IMR-90 (cell line): ENCODE measurements at regions of chr17 and their contacts with region 1.

Region 1: GRCh38 chr17:35170968-35171771 is 23.0 kb downstream of the SLC35G3 start:
- DNase-seq: peak; percentile 15
- ATAC-seq: peak; percentile 49
- H3K4me3 ChIP-seq: no peak overlapping the region
- H3K27ac ChIP-seq: no peak overlapping the region
- H3K4me1 ChIP-seq: peaks cover 4% of the 10 kb centered on the region; the same call in 1 of the 2 replicates
- H3K27me3 ChIP-seq: peaks cover 3% of the 10 kb centered on the region; the same call in 1 of the 2 replicates
- CTCF ChIP-seq: peak; percentile 50
- POLR2A ChIP-seq: no peak
- RAD21 ChIP-seq: peak; percentile 51

Region 2: DNA sequence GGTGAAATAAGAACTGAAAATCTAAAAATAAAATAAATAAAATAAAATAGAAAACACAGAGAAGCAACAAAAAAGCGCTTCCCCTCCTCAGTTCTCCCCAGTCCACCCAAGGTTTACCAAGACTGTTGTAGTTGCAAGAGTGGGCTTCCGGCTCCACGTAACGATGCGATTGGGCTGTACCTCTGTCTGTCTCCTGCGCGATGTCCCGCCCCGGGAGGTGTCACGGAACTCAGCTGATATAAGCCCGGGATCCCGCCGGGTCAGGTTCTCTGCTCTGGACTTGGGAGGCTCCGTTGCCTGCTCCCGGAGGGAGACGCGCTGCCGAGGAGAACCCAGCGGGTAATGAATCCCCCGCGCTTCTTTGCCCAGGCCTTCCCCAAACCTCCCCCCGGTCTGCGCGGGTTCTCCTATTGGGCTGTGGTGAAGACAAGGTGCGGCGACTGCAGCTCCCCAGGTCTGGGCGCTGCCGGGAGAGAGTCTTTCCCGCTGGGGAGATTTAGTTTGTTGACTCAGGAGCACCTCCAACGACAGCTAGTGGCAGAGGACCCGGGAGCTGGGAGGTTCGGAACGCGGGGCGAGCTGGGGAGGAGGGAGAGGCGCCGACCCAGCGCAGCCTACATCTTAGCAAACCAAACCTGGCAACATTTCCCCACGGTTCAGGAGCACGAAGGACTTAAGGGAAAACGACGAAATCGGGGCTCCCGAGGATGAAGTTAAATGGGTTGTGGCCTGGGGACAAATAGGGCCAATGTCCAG is 71.8 kb after region 1 on chr17 and contains the start of gene SLFN5:
- CTCF ChIA-PET with region 1: no interaction called
- POLR2A ChIA-PET with region 1: no interaction called
- dilution Hi-C with region 1: no loop called
- in situ Hi-C with region 1: no loop called
- intact Hi-C with region 1: loop called (anchors 5 kb)
- DNase-seq: peak; percentile 90
- ATAC-seq: peak; percentile 79
- H3K4me3 ChIP-seq: peak within 1 kb of the TSS; percentile 59
- H3K27ac ChIP-seq: peak within 1 kb of the TSS; percentile 85
- H3K4me1 ChIP-seq: peaks cover 5% of the 10 kb centered on the region
- H3K27me3 ChIP-seq: no peaks in the 10 kb centered on the region
- CTCF ChIP-seq: no peak
- POLR2A ChIP-seq: peak; percentile 99
- RAD21 ChIP-seq: 0 out of 2 replicates have a peak, but pooled peaks have one; percentile 5
- total RNA-seq, gene SLFN5: 48.9 and 64.2 TPM in 2 replicates

Region 3: GRCh38 chr17:35432176-35433074 is 261.3 kb after region 1 on chr17 and contains the start of gene SLFN12:
- CTCF ChIA-PET with region 1: no interaction called
- POLR2A ChIA-PET with region 1: no interaction called
- dilution Hi-C with region 1: no loop called
- in situ Hi-C with region 1: no loop called
- intact Hi-C with region 1: loop called (anchors 10 kb)
- DNase-seq: peak; percentile 98
- ATAC-seq: peak; percentile 78
- H3K4me3 ChIP-seq: peak within 1 kb of the TSS; percentile 59
- H3K27ac ChIP-seq: peak within 1 kb of the TSS; percentile 92
- H3K4me1 ChIP-seq: peaks cover 1% of the 10 kb centered on the region; the same call in 1 of the 2 replicates
- H3K27me3 ChIP-seq: no peaks in the 10 kb centered on the region
- CTCF ChIP-seq: no peak
- POLR2A ChIP-seq: peak; percentile 83; the same call in 1 of the 2 replicates
- RAD21 ChIP-seq: no peak
- total RNA-seq, gene SLFN12: 38.9 and 48.6 TPM in 2 replicates

Region 4: GRCh38 chr17:35794988-35795824 is 624.0 kb after region 1 on chr17 and contains the start of gene MMP28:
- CTCF ChIA-PET with region 1: no interaction called
- POLR2A ChIA-PET with region 1: no interaction called
- dilution Hi-C with region 1: no loop called
- in situ Hi-C with region 1: no loop called
- intact Hi-C with region 1: no loop called
- DNase-seq: no peak
- ATAC-seq: peak; percentile 81
- H3K4me3 ChIP-seq: peak within 1 kb of the TSS; percentile 43
- H3K27ac ChIP-seq: no peak within 1 kb of the TSS
- H3K4me1 ChIP-seq: no peaks in the 10 kb centered on the region; the same call in 1 of the 2 replicates
- H3K27me3 ChIP-seq: peaks cover 65% of the 10 kb centered on the region
- CTCF ChIP-seq: no peak
- POLR2A ChIP-seq: no peak
- RAD21 ChIP-seq: no peak
- total RNA-seq, gene MMP28: 0.18 TPM in 1 of 2 replicates, not detected in the other